AG04449 (cell line): ENCODE measurements at regions of chr11 and their contacts with region 1.

Region 1: GRCh38 chr11:125404776-125405435 is 91.2 kb downstream of the FEZ1 start:
- DNase-seq: no peak
- H3K4me3 ChIP-seq: no peak overlapping the region
- CTCF ChIP-seq: peak; percentile 99

Region 2: DNA sequence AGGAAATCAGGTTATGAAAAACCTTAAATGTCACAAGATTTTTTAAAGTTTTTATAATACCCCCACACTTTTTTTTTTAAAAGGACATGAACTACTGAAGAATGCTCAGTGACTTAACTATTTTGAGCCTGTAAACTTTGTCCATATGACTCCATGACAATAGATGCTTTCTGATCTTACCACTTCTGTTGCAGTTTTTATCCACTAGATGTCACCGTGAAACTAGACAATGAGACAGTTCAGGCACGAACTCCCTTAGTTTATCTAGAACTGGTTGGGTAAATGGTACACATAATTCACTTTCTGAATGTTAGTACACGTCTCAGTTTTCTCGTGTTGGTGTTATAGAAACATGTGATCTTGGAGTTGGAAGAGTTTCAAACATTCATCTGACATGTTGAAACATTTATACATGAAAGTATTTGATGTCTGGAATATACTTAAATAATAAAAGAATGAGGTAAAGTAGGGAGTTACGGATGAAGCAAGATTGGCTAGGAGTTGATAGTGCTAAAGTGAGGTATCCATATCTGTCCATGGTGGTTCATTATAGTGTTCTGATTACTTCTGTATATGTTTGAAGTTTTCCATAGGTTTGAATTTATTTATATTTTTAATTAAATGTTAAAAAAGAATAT is 442.8 kb before region 1 on chr11:
- CTCF ChIA-PET with region 1: interaction called, 13 read pairs
- POLR2A ChIA-PET with region 1: no interaction called
- DNase-seq: peak; percentile 33
- H3K4me3 ChIP-seq: no peak overlapping the region
- CTCF ChIP-seq: peak; percentile 51

Region 3: GRCh38 chr11:125111343-125112207 is 293.3 kb before region 1 on chr11 and contains the start of gene TMEM218:
- CTCF ChIA-PET with region 1: interaction called, 10 read pairs
- POLR2A ChIA-PET with region 1: no interaction called
- DNase-seq: peak; percentile 94
- H3K4me3 ChIP-seq: peak within 1 kb of the TSS; percentile 87
- CTCF ChIP-seq: no peak

Region 4: GRCh38 chr11:125164422-125165110 is 240.3 kb before region 1 on chr11 and contains the start of gene PKNOX2:
- CTCF ChIA-PET with region 1: interaction called, 12 read pairs
- POLR2A ChIA-PET with region 1: no interaction called
- DNase-seq: no peak
- H3K4me3 ChIP-seq: peak within 1 kb of the TSS; percentile 57
- CTCF ChIP-seq: peak; percentile 89

Region 5: GRCh38 chr11:125390946-125391345 is 14.0 kb before region 1 on chr11:
- CTCF ChIA-PET with region 1: interaction called, 33 read pairs
- POLR2A ChIA-PET with region 1: no interaction called
- DNase-seq: peak; percentile 26
- H3K4me3 ChIP-seq: no peak overlapping the region
- CTCF ChIP-seq: no peak

Region 6: GRCh38 chr11:125416981-125417935 is 12.4 kb after region 1 on chr11:
- CTCF ChIA-PET with region 1: interaction called, 40 read pairs
- POLR2A ChIA-PET with region 1: no interaction called
- DNase-seq: no peak
- H3K4me3 ChIP-seq: no peak overlapping the region
- CTCF ChIP-seq: no peak

Region 7: DNA sequence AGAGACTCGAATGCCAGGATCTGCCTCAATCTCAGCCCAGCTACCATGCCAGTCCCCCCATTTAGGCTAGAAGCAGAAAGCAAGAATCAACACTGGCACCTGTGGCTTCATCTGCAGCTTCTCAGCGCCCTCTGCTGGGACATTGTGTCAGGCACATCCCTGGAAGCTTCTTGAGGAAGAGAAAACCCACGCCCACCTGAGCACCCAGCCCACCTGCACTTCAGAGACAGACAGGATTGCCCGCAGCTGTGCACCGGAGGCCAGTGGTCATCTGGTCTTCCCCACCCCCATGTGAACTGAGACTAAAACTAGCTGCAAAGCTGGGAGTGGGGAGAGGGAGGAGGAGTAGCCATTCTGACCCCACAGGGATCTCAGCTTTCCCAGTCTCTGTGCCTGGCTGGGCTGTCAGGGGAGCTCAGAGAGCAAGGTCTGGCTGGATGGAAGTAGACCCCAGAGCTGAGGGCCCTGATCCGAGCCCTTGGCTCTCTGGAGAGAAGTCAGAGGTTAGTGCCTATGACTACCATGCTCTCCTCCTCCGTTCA is 24.3 kb after region 1 on chr11:
- CTCF ChIA-PET with region 1: interaction called, 92 read pairs
- POLR2A ChIA-PET with region 1: no interaction called
- DNase-seq: no peak
- H3K4me3 ChIP-seq: no peak overlapping the region
- CTCF ChIP-seq: peak; percentile 85